Right cardiac atrium (tissue), 5 donors: ENCODE measurements at regions of chr10 and their contacts with region 1.

Region 1: DNA sequence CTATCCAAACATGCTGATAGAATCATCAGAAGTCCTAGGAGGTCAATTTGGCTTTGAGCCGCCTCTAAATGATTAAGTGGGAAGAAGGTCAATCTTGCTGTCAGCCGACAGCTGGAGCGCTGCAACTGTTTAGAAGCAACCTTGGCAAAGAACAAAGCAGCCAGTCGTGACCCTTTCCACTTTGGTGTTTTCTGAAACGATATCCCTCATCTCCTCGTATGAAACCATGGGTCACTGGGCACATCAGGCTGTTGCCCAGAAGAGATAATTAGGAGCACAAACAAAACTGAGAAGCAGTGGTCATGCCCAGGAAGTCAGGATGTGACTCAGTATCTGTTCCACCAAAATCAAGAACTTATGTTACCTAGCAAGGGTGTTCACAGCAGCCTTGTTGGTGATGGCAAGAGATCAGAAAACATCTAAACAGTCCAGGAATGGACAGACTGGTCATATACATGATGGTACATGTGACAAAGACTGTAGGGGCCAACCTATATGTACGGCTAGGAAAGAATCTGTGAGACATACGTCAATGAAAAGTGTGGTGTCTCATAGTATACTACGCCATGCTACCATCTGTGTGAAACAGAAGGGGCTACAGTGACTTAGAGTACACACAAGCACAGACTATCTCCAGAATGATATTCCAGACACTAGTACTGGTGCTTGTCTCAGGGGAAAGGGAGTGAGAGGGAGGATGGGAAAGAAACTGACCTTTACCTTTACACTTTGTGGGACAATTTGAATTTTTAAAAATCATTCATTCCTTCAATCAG is 22.4 kb downstream of the STN1 start:
- DNase-seq: peak in 1 of 3 donors; percentile 62
- ATAC-seq: peak; percentile 43 to 75
- H3K4me3 ChIP-seq: no peak overlapping the region
- H3K27ac ChIP-seq: peak overlapping the region; percentile 76
- H3K4me1 ChIP-seq: peaks cover 6% of the 10 kb centered on the region
- H3K27me3 ChIP-seq: no peaks in the 10 kb centered on the region

Region 2: DNA sequence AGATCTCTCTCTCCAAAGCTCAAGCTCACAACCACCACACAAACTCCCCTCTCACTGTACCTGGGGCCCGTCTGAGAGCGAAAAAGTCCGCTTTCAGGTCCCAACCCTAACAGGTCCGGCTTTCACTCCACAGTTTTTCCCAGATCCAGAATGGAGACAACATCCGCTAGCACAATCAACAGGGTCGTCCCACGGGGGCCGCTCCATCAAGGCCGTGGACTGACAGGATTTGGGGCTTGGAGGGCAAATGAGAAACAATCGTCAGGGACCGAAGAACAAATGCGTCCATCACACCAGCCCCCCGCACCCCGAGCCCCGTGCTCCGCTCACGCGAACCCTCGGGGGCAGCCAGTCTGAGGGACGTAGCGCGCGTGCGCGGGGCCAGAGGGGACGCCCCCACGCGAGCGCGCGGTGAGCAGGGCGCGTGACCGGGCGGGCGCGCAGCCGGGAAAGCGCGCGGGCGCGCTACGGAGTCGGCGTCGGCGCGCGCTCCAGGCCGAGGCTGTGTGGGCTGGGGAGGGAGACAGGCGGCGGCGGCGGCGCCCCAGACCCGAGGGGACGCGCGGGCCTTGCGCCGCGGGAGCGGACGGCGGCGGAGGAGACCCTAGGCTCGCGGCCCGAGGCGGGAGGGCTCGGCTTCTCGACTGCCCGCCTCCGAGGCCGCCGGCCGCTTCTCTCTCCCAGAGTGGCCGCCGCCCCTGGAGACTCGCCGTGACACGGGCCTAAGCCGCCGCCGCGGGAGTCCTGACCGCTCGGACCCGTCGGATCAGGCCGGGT is 71.3 kb after region 1 on chr10 and contains the start of gene SLK:
- intact Hi-C with region 1: loop called in 1 of 4 experiments (anchors 10 kb)
- DNase-seq: peak; percentile 88 to 95 (median 94)
- ATAC-seq: peak; percentile 96 to 98
- H3K4me3 ChIP-seq: peak within 1 kb of the TSS; percentile 93
- H3K27ac ChIP-seq: peak within 1 kb of the TSS; percentile 96
- H3K4me1 ChIP-seq: peaks cover 2% of the 10 kb centered on the region
- H3K27me3 ChIP-seq: no peaks in the 10 kb centered on the region
- total RNA-seq, gene SLK: 32.8 to 40.5 (median 36.4) TPM

Region 3: GRCh38 chr10:104045151-104046089 is 149.8 kb after region 1 on chr10:
- intact Hi-C with region 1: no loop called
- DNase-seq: peak in 2 of 3 donors; percentile 45 to 68
- ATAC-seq: peak; percentile 71 to 76
- H3K4me3 ChIP-seq: no peak overlapping the region
- H3K27ac ChIP-seq: no peak overlapping the region
- H3K4me1 ChIP-seq: no peaks in the 10 kb centered on the region
- H3K27me3 ChIP-seq: no peaks in the 10 kb centered on the region

Region 4: DNA sequence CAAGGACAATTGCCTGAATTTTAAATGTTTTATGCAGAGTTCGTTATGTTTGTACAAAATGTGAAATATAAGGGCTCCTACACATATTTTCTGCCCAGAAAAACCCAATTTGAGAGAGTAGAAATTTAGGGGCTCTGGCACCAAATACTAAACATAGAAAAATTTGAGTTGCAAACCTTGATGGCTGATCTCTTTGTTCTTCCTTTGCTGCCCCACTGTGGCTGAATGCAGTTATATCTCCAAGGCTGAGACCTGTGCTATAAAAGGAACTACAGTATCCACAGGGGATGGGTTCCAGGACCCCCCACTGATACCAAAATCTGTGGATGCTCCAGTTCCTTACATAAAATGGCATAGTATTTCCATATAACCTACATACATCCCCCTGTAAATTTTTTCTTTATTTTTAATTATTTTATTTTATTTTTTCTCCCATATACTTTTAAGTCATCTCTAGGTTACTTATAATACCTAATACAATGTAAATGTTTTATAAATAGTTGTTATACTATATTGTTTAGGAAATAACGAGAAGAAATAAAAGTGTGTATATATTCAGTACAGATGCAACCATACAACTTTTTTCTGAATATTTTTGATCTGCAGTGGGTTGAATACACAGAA is 314.1 kb after region 1 on chr10:
- intact Hi-C with region 1: loop called in 1 of 4 experiments (anchors 10 kb)
- DNase-seq: no peak
- ATAC-seq: peak; percentile 45 to 70
- H3K4me3 ChIP-seq: no peak overlapping the region
- H3K27ac ChIP-seq: no peak overlapping the region
- H3K4me1 ChIP-seq: no peaks in the 10 kb centered on the region
- H3K27me3 ChIP-seq: no peaks in the 10 kb centered on the region